B cell (primary cell): ENCODE measurements at regions of chr5 and their contacts with region 1.

Region 1: GRCh38 chr5:75336625-75337339 is at the start of gene HMGCR:
- DNase-seq: peak; percentile 99
- ATAC-seq: peak; percentile 95
- H3K4me3 ChIP-seq: peak within 1 kb of the TSS; percentile 71 to 98 (median 88)
- H3K4me3 Mint-ChIP-seq: no peak within 1 kb of the TSS
- H3K27ac ChIP-seq: peak within 1 kb of the TSS; percentile 81 to 91
- H3K27ac Mint-ChIP-seq: no peak within 1 kb of the TSS
- H3K4me1 ChIP-seq: peaks cover 16 to 17% of the 10 kb centered on the region in 2 donors
- H3K4me1 Mint-ChIP-seq: peaks cover 30% of the 10 kb centered on the region
- H3K27me3 ChIP-seq: no peaks in the 10 kb centered on the region
- H3K27me3 Mint-ChIP-seq: no peaks in the 10 kb centered on the region
- CTCF ChIP-seq: peak; percentile 9
- total RNA-seq, gene HMGCR: 55.7 and 64.6 TPM in 2 replicates

Region 2: DNA sequence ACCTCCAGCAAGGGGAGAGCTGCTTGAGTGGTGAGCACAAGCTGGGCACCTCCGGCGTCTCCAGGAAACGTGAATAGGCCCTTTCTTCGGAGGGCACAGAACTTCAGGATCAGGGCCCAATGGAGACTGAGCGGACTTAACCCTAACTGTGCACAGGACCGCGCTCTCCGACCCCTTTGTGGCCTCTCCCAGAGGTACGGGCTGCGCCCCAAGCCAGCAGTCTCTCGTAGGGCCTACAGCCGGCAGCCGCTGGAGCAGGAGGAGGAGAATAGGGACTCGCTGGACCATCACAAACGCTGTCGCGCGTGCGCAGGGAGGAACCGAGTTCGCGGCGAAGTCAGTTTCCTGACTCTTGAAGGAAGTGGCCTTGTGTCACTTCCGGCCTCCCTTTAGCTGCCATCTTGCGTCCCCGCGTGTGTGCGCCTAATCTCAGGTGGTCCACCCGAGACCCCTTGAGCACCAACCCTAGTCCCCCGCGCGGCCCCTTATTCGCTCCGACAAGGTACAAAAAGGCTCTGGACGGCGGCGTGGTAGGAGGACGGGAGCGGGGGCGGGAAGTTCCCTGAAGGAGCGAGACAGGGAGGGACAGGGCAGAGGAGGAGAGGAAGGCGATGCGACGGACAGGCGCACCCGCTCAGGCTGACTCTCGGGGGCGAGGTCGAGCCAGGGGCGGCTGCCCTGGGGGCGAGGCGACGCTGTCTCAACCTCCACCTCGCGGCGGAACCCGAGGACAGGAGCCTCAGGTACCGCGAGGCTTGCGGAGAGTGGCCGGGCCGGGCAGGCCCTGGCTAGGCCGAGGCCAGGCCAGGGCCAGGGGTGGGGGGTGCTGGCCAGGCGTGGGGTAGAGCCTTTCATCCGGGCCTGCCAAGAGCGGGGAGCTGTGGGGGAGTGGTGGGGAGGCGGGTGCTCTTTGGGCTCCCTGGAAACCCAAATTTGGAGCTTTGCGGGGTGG is 1838.4 kb before region 1 on chr5 and contains the start of gene BTF3:
- CTCF ChIA-PET with region 1: no interaction called
- POLR2A ChIA-PET with region 1: no interaction called
- intact Hi-C with region 1: loop called (anchors 5 kb)
- DNase-seq: peak; percentile 96
- ATAC-seq: peak; percentile 95
- H3K4me3 ChIP-seq: peak within 1 kb of the TSS; percentile 60 to 98 (median 97)
- H3K4me3 Mint-ChIP-seq: peak within 1 kb of the TSS; percentile 99
- H3K27ac ChIP-seq: peak within 1 kb of the TSS; percentile 96 to 99
- H3K27ac Mint-ChIP-seq: peak within 1 kb of the TSS; percentile 99
- H3K4me1 ChIP-seq: peaks cover 19 to 33% of the 10 kb centered on the region in 2 donors
- H3K4me1 Mint-ChIP-seq: peaks cover 37% of the 10 kb centered on the region
- H3K27me3 ChIP-seq: no peaks in the 10 kb centered on the region
- H3K27me3 Mint-ChIP-seq: peaks cover 13% of the 10 kb centered on the region
- CTCF ChIP-seq: no peak
- total RNA-seq, gene BTF3: 452 and 466 TPM in 2 replicates

Region 3: GRCh38 chr5:75236322-75237316 is 100.2 kb before region 1 on chr5 and contains the start of gene ANKRD31:
- CTCF ChIA-PET with region 1: interaction called, 16 read pairs
- POLR2A ChIA-PET with region 1: interaction called, 10 read pairs
- intact Hi-C with region 1: loop called (anchors 1 kb)
- DNase-seq: peak; percentile 93
- ATAC-seq: peak; percentile 99
- H3K4me3 ChIP-seq: peak within 1 kb of the TSS; percentile 57 to 84 (median 73)
- H3K4me3 Mint-ChIP-seq: peak within 1 kb of the TSS; percentile 99
- H3K27ac ChIP-seq: peak within 1 kb of the TSS; percentile 45 to 63
- H3K27ac Mint-ChIP-seq: peak within 1 kb of the TSS; percentile 92
- H3K4me1 ChIP-seq: peaks cover 4 to 8% of the 10 kb centered on the region in 2 donors
- H3K4me1 Mint-ChIP-seq: peaks cover 11% of the 10 kb centered on the region
- H3K27me3 ChIP-seq: no peaks in the 10 kb centered on the region
- H3K27me3 Mint-ChIP-seq: peaks cover 7% of the 10 kb centered on the region
- CTCF ChIP-seq: peak; percentile 87
- total RNA-seq, gene ANKRD31: 0.10 TPM in 2 replicates

Region 4: GRCh38 chr5:75351139-75351926 is 14.6 kb after region 1 on chr5:
- CTCF ChIA-PET with region 1: no interaction called
- POLR2A ChIA-PET with region 1: no interaction called
- intact Hi-C with region 1: no loop called
- DNase-seq: no peak
- ATAC-seq: no peak
- H3K4me3 ChIP-seq: no peak overlapping the region
- H3K4me3 Mint-ChIP-seq: no peak overlapping the region
- H3K27ac ChIP-seq: no peak overlapping the region
- H3K27ac Mint-ChIP-seq: no peak overlapping the region
- H3K4me1 ChIP-seq: no peaks in the 10 kb centered on the region
- H3K4me1 Mint-ChIP-seq: no peaks in the 10 kb centered on the region
- H3K27me3 ChIP-seq: no peaks in the 10 kb centered on the region
- H3K27me3 Mint-ChIP-seq: no peaks in the 10 kb centered on the region
- CTCF ChIP-seq: no peak

Region 5: GRCh38 chr5:75566710-75567309 is 230.0 kb after region 1 on chr5:
- CTCF ChIA-PET with region 1: no interaction called
- POLR2A ChIA-PET with region 1: no interaction called
- intact Hi-C with region 1: loop called (anchors 5 kb)
- DNase-seq: peak; percentile 30
- ATAC-seq: peak; percentile 81
- H3K4me3 ChIP-seq: peak overlapping the region in 1 of 5 experiments; percentile 3
- H3K4me3 Mint-ChIP-seq: peak overlapping the region; percentile 85
- H3K27ac ChIP-seq: peak overlapping the region; percentile 17 to 29
- H3K27ac Mint-ChIP-seq: peak overlapping the region; percentile 89
- H3K4me1 ChIP-seq: peaks cover 8 to 21% of the 10 kb centered on the region in 2 donors
- H3K4me1 Mint-ChIP-seq: peaks cover 41% of the 10 kb centered on the region
- H3K27me3 ChIP-seq: no peaks in the 10 kb centered on the region
- H3K27me3 Mint-ChIP-seq: no peaks in the 10 kb centered on the region
- CTCF ChIP-seq: no peak

Region 6: GRCh38 chr5:75717082-75717922 is 380.5 kb after region 1 on chr5 and contains the start of gene POC5:
- CTCF ChIA-PET with region 1: no interaction called
- POLR2A ChIA-PET with region 1: no interaction called
- intact Hi-C with region 1: loop called (anchors 1 kb)
- DNase-seq: peak; percentile 98
- ATAC-seq: peak; percentile 95
- H3K4me3 ChIP-seq: peak within 1 kb of the TSS; percentile 80 to 99 (median 89)
- H3K4me3 Mint-ChIP-seq: peak within 1 kb of the TSS; percentile 100
- H3K27ac ChIP-seq: peak within 1 kb of the TSS; percentile 80 to 85
- H3K27ac Mint-ChIP-seq: peak within 1 kb of the TSS; percentile 99
- H3K4me1 ChIP-seq: peaks cover 12 to 18% of the 10 kb centered on the region in 2 donors
- H3K4me1 Mint-ChIP-seq: peaks cover 37% of the 10 kb centered on the region
- H3K27me3 ChIP-seq: peaks cover 0 to 4% (median 0%) of the 10 kb centered on the region in 4 experiments
- H3K27me3 Mint-ChIP-seq: peaks cover 6% of the 10 kb centered on the region
- CTCF ChIP-seq: no peak
- total RNA-seq, gene POC5: 22.7 and 25.5 TPM in 2 replicates